Activated B cell treated with CpG ODN at 0.5 μM for 24 hours (primary cell): ENCODE measurements at regions of chr5 and their contacts with region 1.

Region 1: DNA sequence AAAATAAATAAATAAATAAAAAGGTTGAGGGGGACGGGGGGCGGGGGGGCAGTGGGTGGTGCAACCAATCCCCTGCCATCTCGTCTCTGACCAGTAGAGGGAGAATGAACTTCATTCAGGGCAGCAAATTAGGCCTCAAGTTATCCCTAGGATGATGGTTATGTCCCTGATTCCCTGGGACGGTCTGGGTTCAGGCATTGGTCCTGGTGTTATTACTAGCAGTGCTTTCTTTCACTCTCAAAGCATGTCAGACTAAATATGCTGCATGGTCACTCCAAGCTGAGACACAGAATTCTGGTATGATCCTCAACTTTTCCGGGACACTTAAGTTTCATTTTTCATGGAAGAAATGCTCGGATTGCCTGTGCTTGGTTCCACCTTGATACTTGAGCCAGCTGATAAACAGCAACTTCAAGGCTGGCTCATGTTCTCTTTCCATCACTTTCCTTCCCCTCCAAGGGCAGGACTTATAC is 59.4 kb downstream of the DAP start:
- DNase-seq: no peak
- ATAC-seq: peak; percentile 26
- H3K4me3 Mint-ChIP-seq: no peak overlapping the region
- H3K27ac Mint-ChIP-seq: no peak overlapping the region
- H3K4me1 Mint-ChIP-seq: peaks cover 58% of the 10 kb centered on the region
- H3K27me3 Mint-ChIP-seq: no peaks in the 10 kb centered on the region
- CTCF ChIP-seq: no peak

Region 2: GRCh38 chr5:10140195-10140973 is 561.2 kb before region 1 on chr5:
- CTCF ChIA-PET with region 1: no interaction called
- POLR2A ChIA-PET with region 1: no interaction called
- intact Hi-C with region 1: no loop called
- DNase-seq: no peak
- ATAC-seq: no peak
- H3K4me3 Mint-ChIP-seq: no peak overlapping the region
- H3K27ac Mint-ChIP-seq: no peak overlapping the region
- H3K4me1 Mint-ChIP-seq: peaks cover 1% of the 10 kb centered on the region
- H3K27me3 Mint-ChIP-seq: no peaks in the 10 kb centered on the region
- CTCF ChIP-seq: no peak

Region 3: DNA sequence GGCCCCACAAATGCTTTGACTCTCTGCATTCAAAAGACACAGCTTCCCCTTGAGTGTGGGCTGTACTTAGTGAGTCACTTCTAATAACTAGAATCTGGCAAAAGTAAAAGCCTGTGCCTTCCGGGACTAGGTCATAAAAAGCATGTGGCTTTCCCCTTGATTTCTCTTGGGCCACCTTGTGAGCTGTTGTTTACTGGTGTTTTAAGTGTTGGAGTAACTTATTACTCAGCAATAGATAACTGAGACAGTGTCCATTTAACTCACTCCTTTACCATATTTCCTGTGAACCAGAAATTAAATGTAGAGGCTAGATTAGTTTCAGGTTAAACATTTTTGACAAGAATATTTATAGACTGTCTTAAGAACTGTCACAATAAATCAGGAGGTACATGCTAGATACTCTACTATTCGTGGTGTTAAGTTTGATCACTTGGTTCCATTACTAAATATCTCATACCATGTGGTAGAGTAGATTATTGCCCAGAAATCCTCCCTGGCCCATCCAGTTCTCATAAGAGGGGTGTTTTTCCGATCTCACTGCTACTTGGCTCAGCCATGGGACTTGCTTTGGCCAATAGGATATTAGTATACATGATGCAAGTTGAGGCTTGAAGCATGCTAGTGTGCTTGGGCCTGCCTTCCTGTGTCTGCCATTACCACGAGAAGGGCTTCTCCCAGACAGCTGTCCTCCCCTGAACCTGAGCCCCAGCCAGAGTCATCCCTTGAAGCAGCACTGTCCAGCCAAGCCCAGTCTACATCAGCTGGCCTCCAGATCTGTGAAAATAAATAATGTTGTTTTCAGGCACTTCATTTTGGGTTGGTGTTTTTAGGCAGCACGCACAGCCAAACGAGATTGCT is 383.5 kb before region 1 on chr5:
- CTCF ChIA-PET with region 1: no interaction called
- POLR2A ChIA-PET with region 1: no interaction called
- intact Hi-C with region 1: no loop called
- DNase-seq: no peak
- ATAC-seq: no peak
- H3K4me3 Mint-ChIP-seq: no peak overlapping the region
- H3K27ac Mint-ChIP-seq: no peak overlapping the region
- H3K4me1 Mint-ChIP-seq: no peaks in the 10 kb centered on the region
- H3K27me3 Mint-ChIP-seq: peaks cover 2% of the 10 kb centered on the region
- CTCF ChIP-seq: no peak

Region 4: DNA sequence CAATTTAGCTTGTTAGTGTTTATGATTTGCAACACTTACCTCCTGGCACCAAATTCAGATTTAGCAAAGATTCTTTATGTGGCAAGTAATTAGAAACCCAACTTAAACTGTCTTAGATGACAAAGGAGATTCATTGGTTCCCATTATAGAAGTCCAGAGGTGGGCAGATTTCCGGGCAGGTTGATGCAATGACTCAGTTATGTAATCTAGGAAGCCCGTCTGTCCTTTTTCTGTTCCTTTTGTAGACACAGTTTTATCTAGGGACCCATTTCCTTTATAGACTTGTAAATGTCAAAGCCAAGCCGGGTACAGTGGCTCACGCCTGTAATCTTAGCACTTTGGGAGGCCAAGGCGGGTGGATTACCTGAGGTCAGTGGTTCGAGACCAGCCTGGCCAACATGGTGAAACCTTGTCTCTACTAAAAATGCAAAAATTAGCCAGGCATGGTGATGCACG is 158.0 kb before region 1 on chr5:
- CTCF ChIA-PET with region 1: no interaction called
- POLR2A ChIA-PET with region 1: no interaction called
- intact Hi-C with region 1: no loop called
- DNase-seq: no peak
- ATAC-seq: no peak
- H3K4me3 Mint-ChIP-seq: no peak overlapping the region
- H3K27ac Mint-ChIP-seq: no peak overlapping the region
- H3K4me1 Mint-ChIP-seq: peaks cover 8% of the 10 kb centered on the region
- H3K27me3 Mint-ChIP-seq: peaks cover 2% of the 10 kb centered on the region
- CTCF ChIP-seq: no peak

Region 5: GRCh38 chr5:10607666-10608073 is 93.9 kb before region 1 on chr5:
- CTCF ChIA-PET with region 1: no interaction called
- POLR2A ChIA-PET with region 1: no interaction called
- intact Hi-C with region 1: no loop called
- DNase-seq: no peak
- ATAC-seq: peak; percentile 35
- H3K4me3 Mint-ChIP-seq: peak overlapping the region; percentile 80
- H3K27ac Mint-ChIP-seq: peak overlapping the region; percentile 90
- H3K4me1 Mint-ChIP-seq: peaks cover 67% of the 10 kb centered on the region
- H3K27me3 Mint-ChIP-seq: no peaks in the 10 kb centered on the region
- CTCF ChIP-seq: no peak

Region 6: GRCh38 chr5:10684303-10685086 is 17.1 kb before region 1 on chr5:
- CTCF ChIA-PET with region 1: interaction called, 7 read pairs
- POLR2A ChIA-PET with region 1: no interaction called
- intact Hi-C with region 1: loop called (anchors 2 kb)
- DNase-seq: no peak
- ATAC-seq: peak; percentile 62
- H3K4me3 Mint-ChIP-seq: peak overlapping the region; percentile 29
- H3K27ac Mint-ChIP-seq: peak overlapping the region; percentile 82
- H3K4me1 Mint-ChIP-seq: peaks cover 15% of the 10 kb centered on the region
- H3K27me3 Mint-ChIP-seq: no peaks in the 10 kb centered on the region
- CTCF ChIP-seq: no peak

Region 7: DNA sequence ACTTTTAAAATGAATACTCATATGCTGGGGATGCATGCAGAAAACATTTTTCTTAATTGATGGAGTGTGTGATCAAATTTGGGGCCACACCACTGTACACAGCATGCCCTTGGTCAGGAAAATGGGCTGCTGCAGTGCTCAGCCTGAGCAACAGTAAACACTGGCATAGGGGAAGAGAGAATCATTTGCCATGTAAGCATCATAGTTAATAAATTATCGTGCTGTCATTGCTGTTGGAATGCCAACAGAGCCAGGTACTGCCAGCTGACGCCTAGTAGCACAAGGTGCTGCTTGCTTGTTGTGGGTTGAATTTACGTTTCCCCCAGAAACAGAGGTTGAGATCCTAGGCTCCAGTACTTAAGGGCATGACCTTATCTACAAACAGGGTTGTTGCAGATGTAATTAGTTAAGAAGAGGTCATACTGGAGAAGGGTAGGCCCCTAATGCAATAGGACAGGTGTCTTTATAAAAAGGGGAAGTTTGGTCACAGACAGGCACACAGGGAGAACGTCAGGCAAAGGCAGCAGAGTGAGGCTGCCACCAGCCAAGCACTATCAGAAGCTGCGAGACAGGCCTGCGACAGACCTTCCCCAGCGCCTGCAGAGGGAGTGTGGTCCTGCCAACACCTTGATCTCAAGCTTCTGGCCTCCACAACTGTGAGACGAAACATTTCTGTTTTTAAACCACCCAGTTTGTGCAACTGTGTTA is 34.1 kb after region 1 on chr5:
- CTCF ChIA-PET with region 1: interaction called, 8 read pairs
- POLR2A ChIA-PET with region 1: interaction called, 4 read pairs
- intact Hi-C with region 1: loop called (anchors 2 kb)
- DNase-seq: peak; percentile 32
- ATAC-seq: peak; percentile 92
- H3K4me3 Mint-ChIP-seq: no peak overlapping the region
- H3K27ac Mint-ChIP-seq: peak overlapping the region; percentile 54
- H3K4me1 Mint-ChIP-seq: peaks cover 46% of the 10 kb centered on the region
- H3K27me3 Mint-ChIP-seq: no peaks in the 10 kb centered on the region
- CTCF ChIP-seq: no peak